HepG2 (cell line): ENCODE measurements at regions of chr15 and their contacts with region 1.

Region 1: DNA sequence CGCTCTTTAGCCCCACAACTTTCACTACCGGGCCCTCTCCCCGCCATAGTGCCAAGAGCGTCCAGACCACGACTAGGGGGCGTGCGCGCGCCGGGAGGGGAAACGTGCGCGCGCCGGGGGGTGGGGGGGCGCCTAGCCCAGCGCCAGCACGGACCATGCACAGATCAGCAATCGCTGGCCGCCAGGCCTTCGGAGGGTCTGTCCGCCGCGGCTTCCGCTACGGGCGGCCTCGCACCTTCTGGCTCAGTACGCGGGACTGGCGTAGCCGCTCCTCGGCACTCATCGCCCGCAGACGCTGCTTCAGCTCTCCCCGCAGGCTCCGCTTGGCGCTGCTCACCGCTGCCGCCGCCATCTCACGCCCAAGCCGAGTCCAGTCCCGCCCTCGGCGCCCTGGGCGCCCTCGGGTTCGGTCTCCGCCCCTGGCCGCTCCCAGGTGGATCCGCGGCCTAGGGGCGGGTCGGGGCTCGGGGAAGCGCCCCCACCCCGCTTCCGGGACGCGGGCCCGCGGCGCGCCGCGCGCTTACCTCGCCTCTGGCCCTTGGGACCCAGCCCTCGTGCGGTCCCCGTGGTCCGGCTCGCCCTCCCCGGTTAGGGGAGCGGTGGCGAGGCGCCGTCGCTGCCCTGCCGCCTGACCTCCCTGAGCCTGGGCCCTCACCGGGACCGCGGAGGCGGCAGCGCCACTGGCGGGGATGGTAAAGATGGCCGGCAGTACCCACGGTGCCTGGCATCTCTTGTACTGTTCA is at the start of gene MTHFS:
- DNase-seq: peak; percentile 66
- ATAC-seq: peak; percentile 96
- H3K4me3 ChIP-seq: peak within 1 kb of the TSS; percentile 85 to 88 (median 85)
- H3K27ac ChIP-seq: peak within 1 kb of the TSS; percentile 98
- H3K4me1 ChIP-seq: peaks cover 62% of the 10 kb centered on the region
- H3K27me3 ChIP-seq: no peaks in the 10 kb centered on the region; a peak in 1 of 5 replicates
- CTCF ChIP-seq: peak; percentile 77
- EP300 ChIP-seq: peak in 1 of 2 experiments; percentile 48; a peak in 1 of 4 replicates
- POLR2A ChIP-seq: peak; percentile 96 to 97
- RAD21 ChIP-seq: peak; percentile 80
- total RNA-seq, gene MTHFS: 37.0 and 52.4 TPM in 2 replicates

Region 2: DNA sequence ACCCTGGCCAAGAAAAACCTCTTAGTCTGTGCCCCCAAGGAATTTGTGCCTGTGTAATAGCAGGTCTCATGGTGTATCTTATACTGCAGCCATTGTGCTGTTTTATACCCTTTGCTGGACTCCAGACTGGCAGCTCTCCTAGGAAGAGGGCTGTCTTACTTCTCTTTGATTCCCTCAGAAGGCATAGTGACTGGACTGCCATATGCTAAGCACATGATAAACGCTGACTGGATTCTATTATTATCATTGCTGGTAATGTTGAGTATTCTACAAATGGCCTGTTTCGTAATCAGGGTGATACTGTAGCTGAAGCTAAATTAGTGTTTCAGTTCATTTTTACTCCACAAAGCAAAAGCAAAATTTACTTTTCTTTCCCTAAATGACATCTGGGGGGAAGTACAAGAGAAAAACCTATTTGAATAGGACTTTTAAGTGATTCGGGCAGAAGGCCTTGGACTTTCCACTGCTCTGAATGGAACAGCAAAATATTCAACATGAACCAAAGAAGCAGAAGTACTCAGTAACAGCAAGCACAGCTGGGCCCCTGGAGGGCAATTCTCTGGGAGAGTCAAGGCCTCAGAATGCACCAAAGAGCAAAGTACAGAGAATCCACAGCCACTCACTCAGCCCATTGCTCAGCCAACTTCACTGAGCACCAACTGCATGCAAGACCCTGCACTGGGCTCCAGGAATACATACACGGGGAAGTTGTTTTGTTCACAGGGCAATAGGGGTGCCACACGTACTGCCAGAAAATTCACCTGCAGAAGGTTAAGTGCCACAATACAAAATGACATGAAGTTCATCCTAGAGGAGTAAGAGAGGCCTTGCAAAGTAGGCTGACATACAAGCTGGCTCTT is 82.1 kb after region 1 on chr15:
- CTCF ChIA-PET with region 1: no interaction called
- POLR2A ChIA-PET with region 1: interaction called, 12 read pairs
- in situ Hi-C with region 1: no loop called
- intact Hi-C with region 1: no loop called
- DNase-seq: peak; percentile 87
- ATAC-seq: peak; percentile 94
- H3K4me3 ChIP-seq: peak overlapping the region in 1 of 3 experiments; percentile 39; a peak in 1 of 6 replicates
- H3K27ac ChIP-seq: peak overlapping the region; percentile 87
- H3K4me1 ChIP-seq: peaks cover 71% of the 10 kb centered on the region
- H3K27me3 ChIP-seq: no peaks in the 10 kb centered on the region
- CTCF ChIP-seq: peak; percentile 5; the same call in 1 of the 2 replicates
- EP300 ChIP-seq: peak; percentile 66 to 88
- POLR2A ChIP-seq: no peak
- RAD21 ChIP-seq: peak; percentile 32